Lower lobe of right lung (tissue), 2 donors: ENCODE measurements at regions of chr21 and their contacts with region 1.

Region 1: DNA sequence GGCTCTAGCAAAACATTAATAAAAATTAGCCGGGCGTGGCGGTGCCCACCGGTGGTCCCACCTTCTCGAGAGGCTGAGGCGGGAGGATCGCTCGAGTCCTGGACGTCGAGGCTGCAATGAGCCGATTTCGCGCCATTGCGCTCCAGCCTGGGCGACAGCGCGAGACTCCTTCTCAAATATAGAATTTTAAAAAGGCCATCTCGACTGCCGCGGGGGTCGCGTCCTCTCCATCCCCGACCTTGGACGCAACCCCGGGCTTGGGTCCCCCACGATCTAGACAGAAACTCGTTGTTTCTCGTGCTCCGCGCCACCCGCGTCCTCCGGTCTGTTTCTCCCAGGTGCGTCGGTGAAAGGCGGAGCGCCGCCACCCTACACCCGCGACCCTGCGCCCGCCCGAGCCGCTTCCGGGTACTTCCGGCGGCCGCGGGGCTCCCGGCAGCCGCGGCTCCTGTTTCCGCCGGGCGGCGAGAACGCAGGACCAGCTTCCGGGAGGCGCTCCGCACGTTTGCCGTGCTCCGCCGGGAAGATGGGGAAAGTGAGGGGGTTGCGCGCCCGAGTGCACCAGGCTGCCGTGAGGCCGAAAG is at the start of gene SLX9:
- DNase-seq: peak; percentile 84
- ATAC-seq: peak; percentile 94 to 98
- H3K4me3 ChIP-seq: peak within 1 kb of the TSS; percentile 70
- H3K27ac ChIP-seq: peak within 1 kb of the TSS; percentile 76
- H3K4me1 ChIP-seq: peaks cover 22% of the 10 kb centered on the region
- H3K27me3 ChIP-seq: peaks cover 1% of the 10 kb centered on the region
- CTCF ChIP-seq: no peak
- total RNA-seq, gene SLX9: 15.7 TPM

Region 2: DNA sequence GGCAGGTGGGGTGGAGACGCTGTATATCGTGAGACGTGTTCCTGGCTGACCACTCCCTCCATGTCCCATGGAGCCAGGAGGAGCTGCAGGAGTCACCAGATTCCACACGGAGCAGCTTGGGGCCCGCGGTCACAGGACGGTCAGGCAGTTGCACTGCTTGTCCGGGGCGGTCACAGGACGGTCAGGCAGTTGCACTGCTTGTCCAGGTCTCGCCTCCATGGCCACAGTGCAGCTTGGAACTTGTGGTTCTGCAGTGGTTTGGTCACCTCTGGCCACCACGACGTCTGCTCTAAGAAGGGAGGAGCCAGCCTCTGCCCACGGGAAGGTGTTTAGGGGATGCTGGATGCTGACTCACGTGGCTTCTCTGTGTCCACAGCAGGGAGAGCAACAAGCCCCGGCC is 33.2 kb after region 1 on chr21:
- intact Hi-C with region 1: no loop called
- DNase-seq: no peak
- ATAC-seq: peak in 1 of 2 donors; percentile 70
- H3K4me3 ChIP-seq: no peak overlapping the region
- H3K27ac ChIP-seq: no peak overlapping the region
- H3K4me1 ChIP-seq: peaks cover 25% of the 10 kb centered on the region
- H3K27me3 ChIP-seq: no peaks in the 10 kb centered on the region
- CTCF ChIP-seq: no peak

Region 3: GRCh38 chr21:45136927-45137611 is 197.4 kb after region 1 on chr21:
- intact Hi-C with region 1: loop called (anchors 10 kb)
- DNase-seq: peak; percentile 83
- ATAC-seq: peak; percentile 73 to 76
- H3K4me3 ChIP-seq: no peak overlapping the region
- H3K27ac ChIP-seq: no peak overlapping the region
- H3K4me1 ChIP-seq: peaks cover 23% of the 10 kb centered on the region
- H3K27me3 ChIP-seq: no peaks in the 10 kb centered on the region
- CTCF ChIP-seq: peak; percentile 79